HEK293 (cell line): ENCODE measurements at regions of chr11 and their contacts with region 1.

Region 1: GRCh38 chr11:12281571-12282478 is 95.5 kb upstream of the PARVA start:
- H3K4me3 ChIP-seq: no peak overlapping the region
- H3K27ac ChIP-seq: no peak overlapping the region
- H3K4me1 ChIP-seq: no peaks in the 10 kb centered on the region
- CTCF ChIP-seq: peak; percentile 65

Region 2: GRCh38 chr11:12066799-12067508 is 214.9 kb before region 1 on chr11:
- CTCF ChIA-PET with region 1: interaction called, 17 read pairs
- POLR2A ChIA-PET with region 1: no interaction called
- H3K4me3 ChIP-seq: no peak overlapping the region
- H3K27ac ChIP-seq: peak overlapping the region; percentile 28; the same call in 1 of the 2 replicates
- H3K4me1 ChIP-seq: no peaks in the 10 kb centered on the region
- CTCF ChIP-seq: no peak

Region 3: GRCh38 chr11:12087075-12088004 is 194.5 kb before region 1 on chr11:
- CTCF ChIA-PET with region 1: interaction called, 12 read pairs
- POLR2A ChIA-PET with region 1: interaction called, 3 read pairs
- H3K4me3 ChIP-seq: no peak overlapping the region
- H3K27ac ChIP-seq: no peak overlapping the region
- H3K4me1 ChIP-seq: no peaks in the 10 kb centered on the region
- CTCF ChIP-seq: no peak

Region 4: GRCh38 chr11:12144330-12145180 is 137.3 kb before region 1 on chr11:
- CTCF ChIA-PET with region 1: no interaction called
- POLR2A ChIA-PET with region 1: no interaction called
- H3K4me3 ChIP-seq: no peak overlapping the region
- H3K27ac ChIP-seq: no peak overlapping the region
- H3K4me1 ChIP-seq: no peaks in the 10 kb centered on the region
- CTCF ChIP-seq: no peak